Heart right ventricle (tissue), 16 donors: ENCODE measurements at regions of chr17 and their contacts with region 1.

Region 1: DNA sequence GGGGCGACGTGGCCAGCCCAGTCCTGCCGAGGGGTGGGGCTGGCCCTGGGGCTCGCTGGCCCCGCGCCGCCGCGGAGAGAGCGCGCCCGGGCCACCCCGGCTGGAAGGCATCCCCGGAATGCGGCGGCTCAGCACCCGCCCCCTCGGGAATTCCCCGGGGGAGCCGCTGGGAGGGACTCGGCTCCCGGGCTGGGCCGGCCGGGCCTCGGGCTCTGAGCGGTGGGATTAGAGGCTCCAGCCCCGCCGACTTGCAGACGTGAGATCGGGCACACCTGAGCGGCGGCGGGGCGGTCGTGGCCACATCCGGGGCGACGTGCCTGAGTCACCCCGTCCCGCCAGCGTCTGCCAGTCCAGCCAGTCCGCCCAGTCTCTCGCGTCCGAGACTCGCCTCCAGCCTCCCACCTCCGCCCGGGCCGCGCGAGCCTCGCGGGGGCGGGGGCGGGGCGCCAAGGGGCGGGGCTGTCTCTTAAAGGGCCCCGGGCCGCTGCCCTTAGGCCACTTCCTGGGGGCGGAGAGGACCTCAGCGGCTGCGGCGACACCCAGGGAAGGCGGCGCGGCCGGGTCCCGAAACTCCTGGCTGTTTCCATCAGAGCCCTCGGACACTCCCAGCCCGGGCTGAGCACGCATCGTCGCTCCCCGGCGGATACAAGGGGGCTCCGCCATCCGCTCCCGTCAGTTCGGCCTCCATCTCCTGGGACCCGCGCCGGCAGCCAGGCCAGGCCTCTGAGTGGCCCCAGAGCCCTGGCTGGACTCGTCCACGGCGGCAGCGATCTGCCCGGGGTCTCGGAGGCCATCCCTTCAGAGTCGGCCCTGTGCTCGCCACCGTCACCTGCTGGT is at the start of gene KCTD11:
- DNase-seq: peak; percentile 91 to 93
- ATAC-seq: peak; percentile 70 to 84 (median 80)
- H3K4me3 ChIP-seq: peak within 1 kb of the TSS; percentile 73 to 91 (median 84)
- H3K27ac ChIP-seq: peak within 1 kb of the TSS; percentile 96 to 100 (median 99)
- H3K4me1 ChIP-seq: peaks cover 8 to 65% (median 46%) of the 10 kb centered on the region in 9 donors
- H3K27me3 ChIP-seq: no peaks in the 10 kb centered on the region
- CTCF ChIP-seq: peak in 6 of 9 donors; percentile 44 to 69 (median 58)
- total RNA-seq, gene KCTD11: 4.3 to 8.5 (median 5.3) TPM

Region 2: DNA sequence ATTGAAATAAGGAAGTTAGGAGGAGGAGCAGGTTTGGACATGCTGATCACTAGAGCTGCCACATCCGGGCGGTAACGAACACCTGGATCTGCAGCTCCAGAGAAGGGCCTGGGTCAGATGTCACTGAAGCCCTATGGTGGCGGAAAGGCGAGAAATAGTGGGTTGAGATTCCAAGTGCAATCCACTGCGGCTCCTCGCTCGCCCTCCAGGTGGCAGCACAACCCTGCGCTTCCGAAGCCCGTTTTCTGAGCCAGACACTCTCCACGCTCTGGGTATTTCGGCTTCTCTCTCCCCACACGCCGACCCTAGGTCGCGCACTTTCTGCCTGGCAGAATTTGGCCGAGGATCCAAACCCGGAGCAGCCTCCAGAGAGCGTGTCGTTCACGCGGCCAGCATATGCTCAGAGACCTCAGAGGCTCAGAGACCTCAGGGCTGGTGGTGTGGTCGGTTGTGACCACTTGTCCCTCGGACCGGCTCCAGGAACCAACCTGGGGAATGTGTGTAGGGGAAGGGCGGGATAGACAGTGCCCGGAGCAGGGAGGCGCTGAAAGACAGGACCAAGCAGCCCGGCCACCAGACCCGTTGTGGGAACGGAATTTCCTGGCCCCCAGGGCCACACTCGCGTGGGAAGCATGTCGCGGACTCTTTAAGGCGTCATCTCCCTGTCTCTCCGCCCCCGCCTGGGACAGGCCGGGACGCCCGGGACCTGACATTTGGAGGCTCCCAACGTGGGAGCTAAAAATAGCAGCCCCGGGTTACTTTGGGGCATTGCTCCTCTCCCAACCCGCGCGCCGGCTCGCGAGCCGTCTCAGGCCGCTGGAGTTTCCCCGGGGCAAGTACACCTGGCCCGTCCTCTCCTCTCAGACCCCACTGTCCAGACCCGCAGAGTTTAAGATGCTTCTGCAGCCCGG is 71.1 kb before region 1 on chr17:
- intact Hi-C with region 1: loop called in 4 of 10 experiments (anchors 2 to 5 kb)
- DNase-seq: peak; percentile 86
- ATAC-seq: peak; percentile 64 to 80 (median 77)
- H3K4me3 ChIP-seq: peak overlapping the region in 9 of 10 donors; percentile 41 to 66 (median 61)
- H3K27ac ChIP-seq: peak overlapping the region; percentile 84 to 98 (median 92)
- H3K4me1 ChIP-seq: peaks cover 0 to 54% (median 28%) of the 10 kb centered on the region in 9 donors
- H3K27me3 ChIP-seq: peaks cover 0 to 39% (median 0%) of the 10 kb centered on the region in 7 donors
- CTCF ChIP-seq: peak; percentile 79 to 97 (median 95)

Region 3: DNA sequence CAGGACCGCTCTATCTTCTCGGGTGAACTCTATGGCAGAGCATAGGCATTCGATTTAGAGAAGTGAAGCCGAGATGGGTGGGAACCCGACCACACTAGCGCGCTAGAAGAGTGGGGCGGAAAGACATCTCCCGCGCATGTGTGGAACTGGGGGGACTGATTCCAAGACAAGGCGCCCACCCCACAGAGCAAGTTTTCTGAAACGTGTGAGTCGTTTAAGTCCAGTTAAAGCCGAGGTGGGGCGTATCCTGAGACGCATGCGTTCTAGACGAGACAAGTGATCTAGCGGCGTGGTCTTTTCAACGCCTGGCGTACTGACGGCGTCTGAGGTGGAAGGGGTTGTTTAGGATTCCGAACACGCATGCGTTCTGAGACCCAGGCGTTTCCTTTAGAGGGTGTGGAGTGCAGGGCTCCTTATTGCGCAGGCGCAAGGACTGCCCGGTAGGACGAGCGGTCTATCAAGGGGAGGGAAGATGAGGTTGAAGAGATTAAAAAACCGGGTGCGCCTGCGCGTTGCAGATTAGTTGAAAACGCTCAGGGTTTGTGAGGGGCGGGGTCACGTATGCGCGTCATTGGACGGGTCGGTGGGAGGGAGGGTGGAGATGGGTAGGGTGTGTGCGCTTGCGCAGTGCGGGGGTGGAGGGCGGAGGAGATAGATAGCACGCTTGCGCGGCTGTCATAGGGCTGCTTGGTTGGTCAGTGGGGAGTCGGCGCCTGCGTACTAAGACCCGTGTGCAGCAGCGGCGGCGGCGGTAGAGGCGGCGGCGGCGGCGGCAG is 44.8 kb before region 1 on chr17 and contains the start of gene EIF5A:
- intact Hi-C with region 1: no loop called
- DNase-seq: peak; percentile 100
- ATAC-seq: peak; percentile 91 to 97 (median 95)
- H3K4me3 ChIP-seq: peak within 1 kb of the TSS; percentile 76 to 98 (median 91)
- H3K27ac ChIP-seq: peak within 1 kb of the TSS; percentile 87 to 100 (median 98)
- H3K4me1 ChIP-seq: peaks cover 0 to 43% (median 29%) of the 10 kb centered on the region in 9 donors
- H3K27me3 ChIP-seq: no peaks in the 10 kb centered on the region
- CTCF ChIP-seq: no peak
- total RNA-seq, gene EIF5A: 197 to 444 (median 248) TPM

Region 4: GRCh38 chr17:7394452-7395191 is 42.7 kb after region 1 on chr17 and contains the start of gene PLSCR3:
- intact Hi-C with region 1: loop called in 6 of 10 experiments (anchors 1 to 5 kb)
- DNase-seq: peak; percentile 89 to 91
- ATAC-seq: peak; percentile 92 to 96 (median 95)
- H3K4me3 ChIP-seq: peak within 1 kb of the TSS; percentile 59 to 98 (median 90)
- H3K27ac ChIP-seq: peak within 1 kb of the TSS; percentile 88 to 98 (median 95)
- H3K4me1 ChIP-seq: peaks cover 0 to 34% (median 22%) of the 10 kb centered on the region in 9 donors
- H3K27me3 ChIP-seq: no peaks in the 10 kb centered on the region
- CTCF ChIP-seq: peak in 7 of 9 donors; percentile 18 to 39 (median 29)
- total RNA-seq, gene PLSCR3: 14.4 to 28.7 (median 17.1) TPM

Region 5: DNA sequence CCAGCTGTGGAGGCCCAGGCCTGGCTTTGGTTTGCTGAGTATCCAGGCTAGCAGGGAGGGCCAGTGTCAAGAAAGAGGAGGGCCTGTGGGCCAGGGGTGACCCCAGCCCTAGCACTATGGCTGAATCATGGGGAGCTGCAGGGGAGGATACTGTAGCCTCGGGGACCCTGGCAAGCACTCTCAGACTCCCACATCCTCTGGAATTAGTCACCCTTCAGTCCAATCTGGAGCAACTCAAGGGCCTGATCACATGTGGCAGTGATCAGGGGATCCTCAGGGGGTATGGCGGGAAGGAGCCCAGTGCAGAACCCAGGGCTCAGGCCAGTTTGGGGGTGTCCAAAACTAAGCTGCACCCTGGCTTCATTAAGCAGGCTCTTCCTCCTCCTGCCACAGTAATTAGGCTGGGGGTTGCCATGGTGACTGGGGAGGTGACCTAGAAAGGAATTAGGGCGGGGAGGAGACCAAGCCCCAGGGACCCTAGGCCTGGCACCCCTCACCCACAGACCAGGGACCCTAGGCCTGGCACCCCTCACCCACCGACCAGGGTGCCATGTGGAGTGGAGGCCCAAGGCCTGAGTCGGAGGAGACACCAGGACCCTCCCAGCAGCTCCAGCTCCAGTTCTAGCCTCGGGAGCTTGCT is 61.6 kb after region 1 on chr17:
- intact Hi-C with region 1: no loop called
- DNase-seq: no peak
- ATAC-seq: peak in 2 of 8 donors; percentile 8 to 32
- H3K4me3 ChIP-seq: no peak overlapping the region
- H3K27ac ChIP-seq: no peak overlapping the region
- H3K4me1 ChIP-seq: no peaks in the 10 kb centered on the region
- H3K27me3 ChIP-seq: no peaks in the 10 kb centered on the region
- CTCF ChIP-seq: no peak

Region 6: DNA sequence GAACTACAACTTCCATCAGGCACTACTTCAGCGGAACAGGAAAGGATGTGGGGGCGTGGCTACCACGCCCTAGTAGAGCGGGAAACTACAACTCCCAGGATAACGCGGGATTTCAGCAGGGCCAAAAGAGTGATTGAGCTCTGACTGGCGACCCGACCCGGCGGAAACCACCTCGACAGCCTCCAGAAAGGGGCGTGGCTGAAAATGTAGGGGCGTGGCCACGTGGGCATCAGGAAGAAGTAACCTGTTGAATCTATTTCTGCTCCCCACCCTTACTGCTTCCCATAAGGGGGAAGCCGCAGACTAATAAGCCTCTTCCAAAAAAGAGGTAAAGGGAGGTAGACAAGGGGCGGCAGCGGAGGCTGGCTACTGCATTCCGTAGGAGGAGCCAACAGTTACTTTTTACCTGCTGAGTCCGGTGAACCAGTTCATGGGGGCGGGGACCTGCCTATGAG is 83.4 kb after region 1 on chr17 and contains the start of gene TMEM102:
- intact Hi-C with region 1: loop called (anchors 1 to 10 kb)
- DNase-seq: peak; percentile 93 to 96
- ATAC-seq: peak; percentile 76 to 92 (median 88)
- H3K4me3 ChIP-seq: peak within 1 kb of the TSS; percentile 16 to 66 (median 51)
- H3K27ac ChIP-seq: peak within 1 kb of the TSS in 9 of 10 donors; percentile 14 to 78 (median 57)
- H3K4me1 ChIP-seq: peaks cover 24 to 56% (median 46%) of the 10 kb centered on the region in 9 donors
- H3K27me3 ChIP-seq: peaks cover 0 to 23% (median 6%) of the 10 kb centered on the region in 7 donors
- CTCF ChIP-seq: no peak
- total RNA-seq, gene TMEM102: 1.2 to 3.5 (median 2.2) TPM

Region 7: GRCh38 chr17:7491583-7491982 is 139.7 kb after region 1 on chr17:
- intact Hi-C with region 1: loop called in 2 of 10 experiments (anchors 5 to 10 kb)
- DNase-seq: no peak
- ATAC-seq: no peak
- H3K4me3 ChIP-seq: no peak overlapping the region
- H3K27ac ChIP-seq: no peak overlapping the region
- H3K4me1 ChIP-seq: peaks cover 10 to 92% (median 61%) of the 10 kb centered on the region in 9 donors
- H3K27me3 ChIP-seq: no peaks in the 10 kb centered on the region
- CTCF ChIP-seq: no peak

Region 8: DNA sequence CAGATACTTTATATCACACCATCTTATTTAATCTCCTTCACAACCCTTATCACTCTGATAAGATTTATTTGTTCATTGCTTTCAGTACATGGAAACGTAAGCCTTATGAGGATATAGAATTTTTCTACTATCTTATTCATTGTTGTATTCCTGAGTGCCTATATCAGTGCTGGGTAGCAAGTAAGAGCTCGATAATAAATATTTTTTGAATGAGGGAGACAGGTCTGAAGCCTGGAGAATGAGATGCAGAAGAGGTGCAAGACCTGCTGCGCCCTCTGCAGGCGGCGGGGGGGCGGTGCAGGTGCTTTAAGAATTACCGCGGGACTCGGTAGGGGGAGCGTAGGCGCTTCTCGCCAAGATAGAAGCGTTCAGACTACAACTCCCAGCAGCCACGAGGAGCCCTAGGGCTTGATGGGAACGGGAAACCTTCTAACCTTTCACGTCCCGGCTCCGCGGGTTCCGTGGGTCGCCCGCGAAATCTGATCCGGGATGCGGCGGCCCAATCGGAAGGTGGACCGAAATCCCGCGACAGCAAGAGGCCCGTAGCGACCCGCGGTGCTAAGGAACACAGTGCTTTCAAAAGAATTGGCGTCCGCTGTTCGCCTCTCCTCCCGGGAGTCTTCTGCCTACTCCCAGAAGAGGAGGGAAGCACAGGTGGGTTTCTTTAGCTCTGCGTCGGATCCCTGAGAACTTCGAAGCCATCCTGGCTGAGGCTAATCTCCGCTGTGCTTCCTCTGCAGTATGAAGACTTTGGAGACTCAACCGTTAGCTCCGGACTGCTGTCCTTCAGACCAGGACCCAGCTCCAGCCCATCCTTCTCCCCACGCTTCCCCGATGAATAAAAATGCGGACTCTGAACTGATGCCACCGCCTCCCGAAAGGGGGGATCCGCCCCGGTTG is 336.3 kb after region 1 on chr17 and contains the start of gene WRAP53:
- intact Hi-C with region 1: loop called in 1 of 10 experiments (anchors 10 kb)
- DNase-seq: peak; percentile 94 to 98
- ATAC-seq: peak; percentile 93 to 96 (median 95)
- H3K4me3 ChIP-seq: peak within 1 kb of the TSS; percentile 68 to 97 (median 80)
- H3K27ac ChIP-seq: peak within 1 kb of the TSS; percentile 84 to 97 (median 94)
- H3K4me1 ChIP-seq: peaks cover 6 to 36% (median 25%) of the 10 kb centered on the region in 9 donors
- H3K27me3 ChIP-seq: no peaks in the 10 kb centered on the region
- CTCF ChIP-seq: peak in 8 of 9 donors; percentile 97 to 100 (median 100)
- total RNA-seq, gene WRAP53: 3.8 to 5.8 (median 4.7) TPM